ENCODE measurements at regions of chr1 and their contacts with region 1.

Region 1: DNA sequence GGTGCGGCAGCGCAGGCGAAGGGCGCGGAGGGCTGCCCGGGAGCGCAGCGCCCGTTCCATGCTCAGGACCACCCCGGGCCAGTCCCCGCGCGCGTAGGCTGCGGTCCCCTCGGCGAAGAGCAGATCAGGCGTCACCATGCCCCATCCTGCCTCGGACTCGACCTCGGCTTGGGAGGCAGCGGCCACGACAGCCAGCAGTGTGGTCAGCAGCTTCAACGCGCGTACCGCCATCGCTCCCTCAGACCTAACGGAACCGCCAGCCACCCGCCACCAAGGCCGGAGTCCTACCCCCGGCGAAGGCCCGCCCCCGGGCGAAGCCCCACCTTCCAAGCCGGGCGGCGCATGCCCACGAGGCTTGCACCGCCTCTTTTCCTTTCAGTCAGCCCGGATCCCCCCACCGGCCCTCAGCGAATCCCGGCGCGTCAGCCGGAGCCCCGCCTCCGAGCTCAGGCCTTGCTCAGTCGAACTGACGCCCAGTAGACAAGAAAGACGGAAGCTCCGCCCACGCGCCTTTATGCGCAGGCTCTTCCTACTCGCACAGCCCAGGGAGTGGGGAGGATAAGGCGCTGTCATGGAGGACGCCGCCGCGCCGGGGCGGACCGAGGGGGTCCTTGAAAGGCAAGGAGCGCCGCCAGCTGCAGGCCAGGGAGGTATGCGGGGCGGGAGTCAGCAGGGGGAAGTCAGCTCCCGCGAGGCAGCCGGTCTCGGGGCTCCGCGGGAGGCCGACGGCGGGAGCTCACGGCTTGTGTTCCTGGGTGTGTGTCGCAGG is at the starts of genes C1orf50 and P3H1:
- H3K4me3 ChIP-seq: peak within 1 kb of the TSS; percentile 100
- H3K27ac ChIP-seq: peak within 1 kb of the TSS; percentile 54; the same call in 1 of the 2 replicates
- H3K4me1 ChIP-seq: no peaks in the 10 kb centered on the region
- CTCF ChIP-seq: peak; percentile 62

Region 2: DNA sequence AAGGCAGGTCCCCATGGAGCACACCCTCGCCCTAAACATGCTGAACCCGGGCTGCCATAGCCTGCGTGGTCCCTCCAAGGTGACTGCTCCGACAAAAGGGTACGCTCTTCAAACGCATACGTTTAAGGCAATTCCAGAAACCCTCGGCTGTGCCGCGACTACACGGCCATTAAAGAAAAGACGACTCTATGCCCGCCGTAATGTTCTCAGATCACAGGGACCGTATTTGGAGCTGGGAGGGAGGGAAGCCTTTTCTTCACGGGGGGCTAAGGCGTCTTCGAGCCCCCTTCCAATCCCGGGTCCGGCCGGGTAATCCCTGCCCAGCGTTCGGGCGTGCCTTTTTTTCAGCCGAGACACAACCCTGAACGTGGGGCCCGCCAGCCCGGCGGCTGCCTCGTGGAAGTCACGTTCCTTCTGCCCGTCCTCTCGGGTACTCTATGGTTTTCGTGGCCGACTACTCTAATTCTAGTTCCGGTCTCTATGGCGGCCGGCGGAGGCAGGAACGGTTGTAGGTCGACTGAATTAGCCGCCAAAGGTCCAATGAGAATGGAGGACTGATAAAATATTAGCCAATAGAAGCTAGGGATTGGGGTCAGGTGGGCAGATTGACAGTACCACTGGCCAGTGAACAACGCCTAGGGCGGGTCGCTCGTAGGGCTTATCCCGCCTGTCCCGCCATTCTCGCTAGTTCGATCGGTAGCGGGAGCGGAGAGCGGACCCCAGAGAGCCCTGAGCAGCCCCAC is 85.0 kb before region 1 on chr1 and contains the start of gene YBX1:
- CTCF ChIA-PET with region 1: interaction called, 3 read pairs
- POLR2A ChIA-PET with region 1: interaction called, 34 read pairs
- H3K4me3 ChIP-seq: peak within 1 kb of the TSS; percentile 78
- H3K27ac ChIP-seq: peak within 1 kb of the TSS; percentile 85
- H3K4me1 ChIP-seq: peaks cover 12% of the 10 kb centered on the region
- CTCF ChIP-seq: no peak

Region 3: GRCh38 chr1:42784547-42784945 is 17.6 kb after region 1 on chr1:
- CTCF ChIA-PET with region 1: interaction called, 5 read pairs
- POLR2A ChIA-PET with region 1: interaction called, 13 read pairs
- H3K4me3 ChIP-seq: no peak overlapping the region
- H3K27ac ChIP-seq: no peak overlapping the region
- H3K4me1 ChIP-seq: no peaks in the 10 kb centered on the region
- CTCF ChIP-seq: no peak

Region 4: DNA sequence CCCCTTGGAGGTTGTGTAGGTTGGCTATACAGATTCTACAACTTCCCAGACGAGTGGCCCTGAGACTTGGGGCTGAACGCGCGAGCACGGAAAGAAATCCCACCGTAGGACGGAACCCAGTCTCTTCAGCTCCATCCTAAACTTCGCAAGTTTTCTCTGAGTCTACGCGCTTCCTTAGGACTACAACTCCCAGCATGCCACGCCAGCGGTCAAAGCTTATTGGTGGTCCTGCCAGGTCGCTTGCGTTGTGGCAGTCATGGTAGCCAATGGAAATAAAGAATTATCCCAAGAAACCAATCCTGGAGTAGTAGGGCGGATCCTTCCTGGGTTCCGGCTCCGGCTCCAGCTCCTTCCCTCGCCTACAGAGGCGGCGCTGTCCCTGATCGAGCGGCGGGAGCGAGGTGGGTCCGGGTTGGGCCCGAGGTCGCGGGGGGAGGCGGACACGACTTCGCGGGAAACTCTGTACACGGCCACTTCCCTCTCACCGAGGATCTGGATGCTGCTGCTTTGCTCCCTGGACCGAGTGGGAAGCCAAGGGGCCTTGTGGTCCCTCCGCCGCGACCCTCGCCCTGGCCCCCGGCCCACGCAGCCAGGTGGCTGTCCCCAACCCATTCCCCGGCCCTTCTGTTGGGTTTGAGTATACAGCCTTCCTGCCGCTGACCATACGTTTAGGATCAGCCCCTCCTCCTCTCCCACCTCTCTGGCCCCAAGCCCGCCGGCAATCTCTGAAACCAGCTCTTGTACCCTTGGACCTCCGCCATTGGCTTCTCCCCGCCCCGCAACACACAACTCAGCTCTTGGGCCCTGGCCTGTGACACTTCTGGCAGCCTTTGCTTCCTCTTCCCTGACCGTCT is 79.6 kb after region 1 on chr1 and contains the start of gene ZNF691:
- CTCF ChIA-PET with region 1: interaction called, 4 read pairs
- POLR2A ChIA-PET with region 1: interaction called, 35 read pairs
- H3K4me3 ChIP-seq: peak within 1 kb of the TSS; percentile 85
- H3K27ac ChIP-seq: peak within 1 kb of the TSS; percentile 70
- H3K4me1 ChIP-seq: no peaks in the 10 kb centered on the region
- CTCF ChIP-seq: peak; percentile 96

Region 5: GRCh38 chr1:43021547-43022474 is 254.9 kb after region 1 on chr1:
- CTCF ChIA-PET with region 1: no interaction called
- POLR2A ChIA-PET with region 1: no interaction called
- H3K4me3 ChIP-seq: no peak overlapping the region
- H3K27ac ChIP-seq: no peak overlapping the region
- H3K4me1 ChIP-seq: no peaks in the 10 kb centered on the region
- CTCF ChIP-seq: no peak